Mammary epithelial cell (primary cell): ENCODE measurements at regions of chr16 and their contacts with region 1.

Region 1: DNA sequence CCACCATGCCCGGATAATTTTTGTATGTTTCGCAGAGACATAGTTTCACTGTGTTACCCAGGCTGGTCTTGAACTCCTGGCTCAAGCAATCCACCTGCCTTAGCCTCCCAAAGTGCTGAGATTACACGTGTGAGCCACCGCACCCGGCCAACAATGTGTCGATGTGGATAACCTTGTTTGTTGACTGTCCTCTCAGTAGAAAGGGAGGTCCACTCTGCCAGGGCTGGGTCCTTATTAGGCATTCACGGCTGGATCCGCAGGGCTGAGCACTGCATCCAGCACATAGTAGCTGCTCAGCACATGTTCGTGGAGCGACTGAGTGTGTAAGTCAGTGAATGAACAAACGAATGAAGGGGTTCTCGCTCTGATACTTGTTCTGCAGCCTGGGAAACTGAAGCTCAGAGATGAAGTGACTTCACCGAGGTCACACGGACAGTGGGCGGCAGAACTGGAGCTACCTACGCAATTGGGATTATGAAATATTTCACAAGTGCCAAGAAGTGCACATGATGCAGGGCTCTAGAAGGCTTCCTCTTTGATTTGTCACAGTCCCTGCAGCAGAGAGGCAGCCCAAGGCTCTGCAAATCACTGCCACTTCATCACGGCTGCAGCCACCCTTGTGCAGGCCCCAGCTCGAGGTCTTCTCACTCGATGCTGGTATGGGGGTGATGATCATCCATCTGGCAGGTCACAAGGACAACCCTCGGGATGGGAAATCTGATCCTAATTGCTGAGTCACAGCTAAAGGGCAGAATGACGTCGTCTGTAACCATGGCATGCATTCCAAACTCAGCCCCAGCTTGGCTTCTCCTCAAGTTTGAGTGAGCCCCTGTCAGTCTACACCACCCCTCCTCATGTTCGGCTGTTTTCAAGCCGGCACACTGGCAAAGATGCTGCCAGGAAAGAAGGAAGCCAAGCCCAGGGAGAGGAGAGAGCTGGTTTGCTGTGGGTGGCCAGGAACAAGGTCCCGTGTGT is 28.0 kb upstream of the SNN start:
- DNase-seq: peak; percentile 95
- H3K4me3 ChIP-seq: no peak overlapping the region
- H3K27ac ChIP-seq: peak overlapping the region; percentile 88
- H3K4me1 ChIP-seq: peaks cover 18% of the 10 kb centered on the region
- H3K27me3 ChIP-seq: no peaks in the 10 kb centered on the region
- CTCF ChIP-seq: no peak

Region 2: GRCh38 chr16:11407047-11407982 is 232.9 kb before region 1 on chr16:
- CTCF ChIA-PET with region 1: no interaction called
- dilution Hi-C with region 1: no loop called
- in situ Hi-C with region 1: loop called in 1 of 2 experiments (anchors 10 kb)
- intact Hi-C with region 1: loop called (anchors 2 kb)
- DNase-seq: peak; percentile 65
- H3K4me3 ChIP-seq: no peak overlapping the region
- H3K27ac ChIP-seq: no peak overlapping the region
- H3K4me1 ChIP-seq: no peaks in the 10 kb centered on the region
- H3K27me3 ChIP-seq: no peaks in the 10 kb centered on the region
- CTCF ChIP-seq: peak; percentile 76 to 77

Region 3: DNA sequence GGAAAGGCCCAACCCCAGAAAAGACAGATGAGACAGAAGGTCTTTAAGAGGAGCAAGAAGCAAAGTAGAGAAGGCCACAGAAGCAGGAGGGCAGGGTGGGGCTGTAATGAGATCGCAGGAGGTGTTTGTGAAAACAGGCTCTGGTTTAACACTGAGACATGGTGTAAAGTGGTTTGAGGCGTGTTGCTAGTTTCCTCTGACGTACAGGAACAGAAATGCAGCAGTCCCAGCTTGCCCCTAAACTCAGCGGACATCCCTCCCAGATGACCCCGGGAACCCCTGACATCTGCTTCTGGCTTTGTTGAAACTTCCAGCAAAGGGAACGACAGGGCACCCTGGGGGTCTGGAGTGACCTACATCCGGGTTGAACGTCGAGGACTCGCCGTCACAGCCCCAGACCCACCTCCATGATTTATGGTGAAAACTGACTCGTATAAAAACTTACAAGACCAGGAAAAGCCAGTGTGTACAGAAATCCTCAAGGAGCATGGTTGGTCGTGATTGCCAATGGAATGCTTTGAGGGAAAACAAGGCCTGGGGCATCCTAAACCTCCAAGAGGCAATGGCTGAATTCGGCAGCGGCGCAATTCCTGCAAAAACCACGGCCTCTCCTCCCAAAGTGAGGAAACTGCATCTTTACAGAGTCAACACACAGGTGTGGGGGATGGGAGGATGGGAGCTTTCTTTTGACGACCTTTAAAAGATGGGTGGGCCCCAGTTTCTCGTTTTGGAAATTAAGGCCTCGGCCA is 79.3 kb before region 1 on chr16:
- CTCF ChIA-PET with region 1: no interaction called
- dilution Hi-C with region 1: no loop called
- in situ Hi-C with region 1: no loop called
- intact Hi-C with region 1: loop called (anchors 1 kb)
- DNase-seq: peak; percentile 92
- H3K4me3 ChIP-seq: peak overlapping the region in 1 of 3 experiments; percentile 20
- H3K27ac ChIP-seq: peak overlapping the region; percentile 92
- H3K4me1 ChIP-seq: peaks cover 37% of the 10 kb centered on the region
- H3K27me3 ChIP-seq: no peaks in the 10 kb centered on the region
- CTCF ChIP-seq: no peak

Region 4: GRCh38 chr16:11613381-11614303 is 26.6 kb before region 1 on chr16:
- CTCF ChIA-PET with region 1: no interaction called
- dilution Hi-C with region 1: no loop called
- in situ Hi-C with region 1: no loop called
- intact Hi-C with region 1: loop called (anchors 1 kb)
- DNase-seq: peak; percentile 94
- H3K4me3 ChIP-seq: no peak overlapping the region
- H3K27ac ChIP-seq: no peak overlapping the region
- H3K4me1 ChIP-seq: peaks cover 42% of the 10 kb centered on the region
- H3K27me3 ChIP-seq: no peaks in the 10 kb centered on the region
- CTCF ChIP-seq: no peak

Region 5: DNA sequence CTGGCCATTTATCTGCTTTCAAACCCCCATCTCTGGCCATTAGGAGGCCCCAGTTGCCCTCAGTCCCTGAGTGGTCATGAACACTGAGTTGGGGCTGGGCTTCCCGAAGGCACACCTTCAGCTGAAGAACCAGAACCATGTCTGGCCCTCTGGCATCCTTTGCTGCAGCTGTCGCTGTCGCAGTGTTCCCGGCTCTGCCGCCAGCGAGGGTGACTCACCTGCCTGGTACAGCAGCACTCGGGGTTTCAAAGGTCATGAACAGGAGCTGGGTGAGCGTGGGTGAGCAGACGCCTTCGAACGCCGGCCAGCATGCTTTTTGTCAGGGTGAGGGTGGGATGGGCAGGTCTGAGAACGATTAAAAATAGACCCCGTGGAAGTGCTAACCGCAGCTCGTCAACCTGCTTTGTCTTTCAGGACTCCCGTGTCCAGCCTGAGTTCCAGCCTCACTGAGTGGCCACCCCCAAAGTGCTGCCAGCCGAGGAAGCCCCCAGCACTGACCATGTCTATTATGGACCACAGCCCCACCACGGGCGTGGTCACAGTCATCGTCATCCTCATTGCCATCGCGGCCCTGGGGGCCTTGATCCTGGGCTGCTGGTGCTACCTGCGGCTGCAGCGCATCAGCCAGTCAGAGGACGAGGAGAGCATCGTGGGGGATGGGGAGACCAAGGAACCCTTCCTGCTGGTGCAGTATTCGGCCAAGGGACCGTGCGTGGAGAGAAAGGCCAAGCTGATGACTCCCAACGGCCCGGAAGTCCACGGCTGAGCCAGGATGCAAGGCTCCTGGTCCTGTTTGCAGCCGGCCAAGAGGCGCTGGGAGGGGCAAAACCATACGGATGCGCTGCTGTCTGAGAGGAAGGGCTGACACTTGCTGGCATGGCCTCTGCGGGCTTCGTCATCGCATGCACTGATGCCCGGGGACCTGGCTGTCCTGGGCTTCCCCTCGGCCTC is 35.6 kb after region 1 on chr16:
- CTCF ChIA-PET with region 1: no interaction called
- dilution Hi-C with region 1: loop called (anchors 5 kb)
- in situ Hi-C with region 1: no loop called
- intact Hi-C with region 1: loop called (anchors 2 kb)
- DNase-seq: peak; percentile 43
- H3K4me3 ChIP-seq: no peak overlapping the region
- H3K27ac ChIP-seq: peak overlapping the region; percentile 30
- H3K4me1 ChIP-seq: peaks cover 70% of the 10 kb centered on the region
- H3K27me3 ChIP-seq: no peaks in the 10 kb centered on the region
- CTCF ChIP-seq: no peak

Region 6: GRCh38 chr16:11715246-11715947 is 75.2 kb after region 1 on chr16:
- CTCF ChIA-PET with region 1: no interaction called
- dilution Hi-C with region 1: no loop called
- in situ Hi-C with region 1: no loop called
- intact Hi-C with region 1: loop called (anchors 1 kb)
- DNase-seq: no peak
- H3K4me3 ChIP-seq: no peak overlapping the region
- H3K27ac ChIP-seq: no peak overlapping the region
- H3K4me1 ChIP-seq: no peaks in the 10 kb centered on the region
- H3K27me3 ChIP-seq: no peaks in the 10 kb centered on the region
- CTCF ChIP-seq: no peak